ENCODE measurements at regions of chr20 and their contacts with region 1.

Region 1: GRCh38 chr20:32521780-32522525 is 63.2 kb downstream of the NOL4L start:
- DNase-seq: peak; percentile 53 to 77 (median 63)
- H3K4me3 ChIP-seq: no peak overlapping the region
- H3K4me3 Mint-ChIP-seq: peak overlapping the region in 5 of 7 donors; percentile 29 to 80 (median 53)
- H3K27ac ChIP-seq: peak overlapping the region; percentile 28
- H3K27ac Mint-ChIP-seq: peak overlapping the region; percentile 29 to 99 (median 88)
- H3K4me1 ChIP-seq: peaks cover 69% of the 10 kb centered on the region
- H3K4me1 Mint-ChIP-seq: peaks cover 46 to 58% (median 48%) of the 10 kb centered on the region in 3 donors
- H3K27me3 ChIP-seq: no peaks in the 10 kb centered on the region
- H3K27me3 Mint-ChIP-seq: no peaks in the 10 kb centered on the region

Region 2: GRCh38 chr20:32509639-32510066 is 12.3 kb before region 1 on chr20:
- CTCF ChIA-PET with region 1: interaction called, 15 read pairs
- POLR2A ChIA-PET with region 1: interaction called, 5 read pairs
- DNase-seq: peak; percentile 37 to 86 (median 77)
- H3K4me3 ChIP-seq: peak overlapping the region; percentile 49
- H3K4me3 Mint-ChIP-seq: peak overlapping the region; percentile 73 to 87 (median 80)
- H3K27ac ChIP-seq: peak overlapping the region; percentile 45
- H3K27ac Mint-ChIP-seq: peak overlapping the region; percentile 86 to 98 (median 94)
- H3K4me1 ChIP-seq: peaks cover 65% of the 10 kb centered on the region
- H3K4me1 Mint-ChIP-seq: peaks cover 72 to 84% (median 83%) of the 10 kb centered on the region in 3 donors
- H3K27me3 ChIP-seq: no peaks in the 10 kb centered on the region
- H3K27me3 Mint-ChIP-seq: no peaks in the 10 kb centered on the region

Region 3: DNA sequence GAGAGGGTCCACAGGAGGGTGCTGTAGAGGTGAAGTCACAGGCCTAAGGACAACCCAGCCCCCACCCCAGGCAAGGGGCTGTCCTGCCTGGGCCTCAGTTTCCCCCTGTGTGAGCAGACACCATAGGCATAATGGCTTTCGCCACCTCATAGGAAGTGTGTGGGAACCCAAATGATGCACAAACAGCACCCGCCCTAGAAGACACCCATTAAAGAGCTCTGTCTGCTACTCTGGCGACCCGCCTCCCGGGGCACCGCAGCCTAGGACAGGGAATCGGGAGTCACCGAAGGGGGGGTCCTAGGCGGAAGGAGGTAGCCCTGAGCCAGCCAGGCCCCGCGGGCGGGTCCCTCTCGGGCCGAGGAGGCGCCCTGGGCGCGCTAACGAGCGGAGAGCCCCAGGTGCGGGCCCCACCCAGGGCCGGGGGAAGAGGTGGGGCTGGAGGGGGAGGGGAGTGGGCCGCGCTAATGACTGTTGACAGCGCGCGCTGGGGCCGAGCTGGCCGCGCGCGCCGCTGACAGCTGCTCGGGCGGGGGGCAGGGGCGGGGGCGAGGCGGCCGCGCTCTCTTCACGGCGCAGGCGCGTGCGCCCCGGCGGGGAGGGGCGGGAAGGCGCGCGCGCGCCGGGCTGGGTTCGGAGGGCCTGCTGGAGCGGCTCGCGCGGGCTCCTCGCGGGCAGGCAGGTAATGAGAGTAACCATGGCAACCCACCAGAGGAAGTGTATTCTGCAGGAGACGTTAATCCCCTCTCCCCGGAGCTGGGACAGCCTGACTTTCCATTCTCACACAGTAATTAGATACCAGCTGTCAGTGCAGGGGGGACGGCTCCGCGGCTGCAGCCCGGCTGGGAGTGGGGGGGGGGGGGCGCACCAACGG is 14.2 kb after region 1 on chr20:
- CTCF ChIA-PET with region 1: interaction called, 227 read pairs
- POLR2A ChIA-PET with region 1: interaction called, 38 read pairs
- DNase-seq: peak; percentile 73 to 91 (median 75)
- H3K4me3 ChIP-seq: peak overlapping the region; percentile 54
- H3K4me3 Mint-ChIP-seq: peak overlapping the region; percentile 77 to 95 (median 85)
- H3K27ac ChIP-seq: peak overlapping the region; percentile 75
- H3K27ac Mint-ChIP-seq: peak overlapping the region; percentile 90 to 100 (median 97)
- H3K4me1 ChIP-seq: peaks cover 84% of the 10 kb centered on the region
- H3K4me1 Mint-ChIP-seq: peaks cover 80 to 89% (median 89%) of the 10 kb centered on the region in 3 donors
- H3K27me3 ChIP-seq: no peaks in the 10 kb centered on the region
- H3K27me3 Mint-ChIP-seq: peaks cover 0 to 3% of the 10 kb centered on the region in 2 donors

Region 4: DNA sequence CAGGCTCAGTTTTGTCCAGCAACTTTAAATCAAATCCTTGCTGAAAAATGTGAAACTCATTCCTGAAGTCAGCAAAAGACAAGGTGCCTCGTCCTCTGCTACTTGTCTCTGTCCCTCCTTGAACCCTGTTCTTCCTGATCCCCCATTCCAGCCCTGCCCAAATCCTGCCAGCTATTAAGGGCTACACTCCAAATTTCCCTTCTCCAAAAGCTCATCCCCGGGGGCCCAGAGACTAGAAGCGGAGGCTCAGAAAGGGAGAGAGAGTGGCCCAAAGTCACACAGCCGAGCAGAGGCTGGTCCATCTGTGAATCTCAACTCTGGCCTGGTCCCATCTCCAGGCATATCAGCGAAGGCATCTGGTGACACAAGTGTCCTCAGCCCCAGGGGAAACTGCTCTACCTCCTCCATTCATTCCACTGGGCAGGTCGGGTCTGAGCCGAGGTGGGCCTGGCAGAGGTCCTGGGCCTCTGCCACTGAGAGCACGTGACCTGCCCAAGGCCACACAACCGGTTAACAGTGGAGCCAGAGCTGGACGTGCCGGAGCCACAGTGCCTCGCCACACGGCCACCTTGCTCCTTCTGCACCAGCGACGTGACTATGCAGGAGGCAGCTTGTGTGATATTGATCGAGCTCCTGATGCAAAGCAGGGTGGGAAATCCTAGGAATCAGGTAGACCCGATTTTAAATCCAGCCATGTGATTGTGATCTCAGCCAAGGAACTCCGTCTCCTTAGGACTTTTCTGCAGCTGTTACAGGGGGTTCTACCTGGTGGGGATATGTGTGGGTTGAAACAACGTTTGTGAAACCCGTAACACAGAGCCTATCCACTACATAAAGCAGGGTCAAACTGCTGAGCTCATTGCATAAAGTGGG is 34.6 kb after region 1 on chr20:
- CTCF ChIA-PET with region 1: interaction called, 20 read pairs
- POLR2A ChIA-PET with region 1: no interaction called
- DNase-seq: no peak
- H3K4me3 ChIP-seq: no peak overlapping the region
- H3K4me3 Mint-ChIP-seq: no peak overlapping the region
- H3K27ac ChIP-seq: no peak overlapping the region
- H3K27ac Mint-ChIP-seq: peak overlapping the region in 6 of 8 donors; percentile 19 to 92 (median 67)
- H3K4me1 ChIP-seq: peaks cover 53% of the 10 kb centered on the region
- H3K4me1 Mint-ChIP-seq: peaks cover 51 to 85% (median 70%) of the 10 kb centered on the region in 3 donors
- H3K27me3 ChIP-seq: no peaks in the 10 kb centered on the region
- H3K27me3 Mint-ChIP-seq: no peaks in the 10 kb centered on the region

Region 5: GRCh38 chr20:32574296-32575226 is 52.6 kb after region 1 on chr20:
- CTCF ChIA-PET with region 1: interaction called, 10 read pairs
- POLR2A ChIA-PET with region 1: no interaction called
- DNase-seq: no peak
- H3K4me3 ChIP-seq: no peak overlapping the region
- H3K4me3 Mint-ChIP-seq: no peak overlapping the region
- H3K27ac ChIP-seq: peak overlapping the region; percentile 31
- H3K27ac Mint-ChIP-seq: peak overlapping the region in 3 of 8 donors; percentile 66 to 92 (median 79)
- H3K4me1 ChIP-seq: peaks cover 96% of the 10 kb centered on the region
- H3K4me1 Mint-ChIP-seq: peaks cover 17 to 55% (median 50%) of the 10 kb centered on the region in 3 donors
- H3K27me3 ChIP-seq: no peaks in the 10 kb centered on the region
- H3K27me3 Mint-ChIP-seq: no peaks in the 10 kb centered on the region

Region 6: GRCh38 chr20:32652739-32653526 is 131.0 kb after region 1 on chr20:
- CTCF ChIA-PET with region 1: interaction called, 186 read pairs
- POLR2A ChIA-PET with region 1: interaction called, 4 read pairs
- DNase-seq: peak; percentile 75 to 90 (median 83)
- H3K4me3 ChIP-seq: no peak overlapping the region
- H3K4me3 Mint-ChIP-seq: peak overlapping the region in 2 of 7 donors; percentile 26 to 37
- H3K27ac ChIP-seq: no peak overlapping the region
- H3K27ac Mint-ChIP-seq: peak overlapping the region in 2 of 8 donors; percentile 43 to 47
- H3K4me1 ChIP-seq: peaks cover 6% of the 10 kb centered on the region
- H3K4me1 Mint-ChIP-seq: peaks cover 5 to 11% (median 8%) of the 10 kb centered on the region in 3 donors
- H3K27me3 ChIP-seq: no peaks in the 10 kb centered on the region
- H3K27me3 Mint-ChIP-seq: no peaks in the 10 kb centered on the region

Measured in CD8-positive, alpha-beta memory T cell (primary cell).